Activated naive CD4-positive, alpha-beta T cell treated with anti-CD3 and anti-CD28 coated beads for 36 hours (primary cell): ENCODE measurements at regions of chr1 and their contacts with region 1.

Region 1: DNA sequence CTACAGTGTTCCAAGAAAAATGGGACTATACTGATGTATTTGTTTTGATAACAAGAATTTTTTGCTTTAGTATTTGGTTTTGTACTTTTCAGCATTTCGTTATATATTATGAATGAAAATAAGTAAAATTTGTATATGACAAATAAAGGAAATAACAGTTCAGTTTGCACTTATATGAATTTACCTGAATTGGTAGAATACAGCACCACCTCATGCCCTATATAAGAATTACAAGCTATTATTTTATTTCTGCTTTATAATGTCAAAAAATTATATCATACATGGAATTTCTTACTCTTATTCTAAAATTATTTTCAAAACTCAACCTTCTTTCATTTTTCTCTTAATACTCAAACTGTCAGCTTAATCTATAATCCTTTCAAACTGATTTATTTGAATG is 14.6 kb downstream of the EFCAB7 start:
- DNase-seq: no peak
- H3K4me3 Mint-ChIP-seq: no peak overlapping the region
- H3K27ac Mint-ChIP-seq: no peak overlapping the region
- H3K4me1 Mint-ChIP-seq: no peaks in the 10 kb centered on the region
- H3K27me3 Mint-ChIP-seq: no peaks in the 10 kb centered on the region

Region 2: GRCh38 chr1:62841587-62842169 is 696.3 kb before region 1 on chr1:
- CTCF ChIA-PET with region 1: interaction called, 4 read pairs
- intact Hi-C with region 1: loop called (anchors 5 kb)
- DNase-seq: peak; percentile 7
- H3K4me3 Mint-ChIP-seq: no peak overlapping the region
- H3K27ac Mint-ChIP-seq: no peak overlapping the region
- H3K4me1 Mint-ChIP-seq: no peaks in the 10 kb centered on the region
- H3K27me3 Mint-ChIP-seq: no peaks in the 10 kb centered on the region

Region 3: GRCh38 chr1:62962901-62963776 is 574.8 kb before region 1 on chr1:
- CTCF ChIA-PET with region 1: interaction called, 4 read pairs
- intact Hi-C with region 1: loop called (anchors 1 kb)
- DNase-seq: peak; percentile 49
- H3K4me3 Mint-ChIP-seq: no peak overlapping the region
- H3K27ac Mint-ChIP-seq: no peak overlapping the region
- H3K4me1 Mint-ChIP-seq: no peaks in the 10 kb centered on the region
- H3K27me3 Mint-ChIP-seq: peaks cover 16% of the 10 kb centered on the region

Region 4: DNA sequence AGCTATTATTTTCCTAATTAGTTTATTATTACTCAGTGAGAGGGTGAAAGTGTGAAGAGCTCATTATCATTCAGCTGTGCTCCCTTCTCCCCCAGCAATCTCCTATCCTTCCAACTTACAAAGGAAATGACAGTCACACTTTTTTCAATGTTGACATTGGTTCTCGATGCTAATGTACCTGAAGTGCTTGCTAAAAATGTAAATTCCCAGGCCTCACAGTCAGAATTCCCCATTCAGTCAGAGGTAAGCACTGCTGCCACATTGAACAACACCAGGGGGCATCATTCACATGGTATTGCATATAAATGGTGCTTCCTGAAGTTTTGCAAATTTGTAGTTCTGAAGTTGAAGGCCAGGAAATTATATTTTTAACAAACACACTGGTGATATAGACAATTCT is 348.3 kb before region 1 on chr1:
- CTCF ChIA-PET with region 1: interaction called, 11 read pairs
- intact Hi-C with region 1: no loop called
- DNase-seq: peak; percentile 15
- H3K4me3 Mint-ChIP-seq: no peak overlapping the region
- H3K27ac Mint-ChIP-seq: no peak overlapping the region
- H3K4me1 Mint-ChIP-seq: no peaks in the 10 kb centered on the region
- H3K27me3 Mint-ChIP-seq: peaks cover 5% of the 10 kb centered on the region

Region 5: DNA sequence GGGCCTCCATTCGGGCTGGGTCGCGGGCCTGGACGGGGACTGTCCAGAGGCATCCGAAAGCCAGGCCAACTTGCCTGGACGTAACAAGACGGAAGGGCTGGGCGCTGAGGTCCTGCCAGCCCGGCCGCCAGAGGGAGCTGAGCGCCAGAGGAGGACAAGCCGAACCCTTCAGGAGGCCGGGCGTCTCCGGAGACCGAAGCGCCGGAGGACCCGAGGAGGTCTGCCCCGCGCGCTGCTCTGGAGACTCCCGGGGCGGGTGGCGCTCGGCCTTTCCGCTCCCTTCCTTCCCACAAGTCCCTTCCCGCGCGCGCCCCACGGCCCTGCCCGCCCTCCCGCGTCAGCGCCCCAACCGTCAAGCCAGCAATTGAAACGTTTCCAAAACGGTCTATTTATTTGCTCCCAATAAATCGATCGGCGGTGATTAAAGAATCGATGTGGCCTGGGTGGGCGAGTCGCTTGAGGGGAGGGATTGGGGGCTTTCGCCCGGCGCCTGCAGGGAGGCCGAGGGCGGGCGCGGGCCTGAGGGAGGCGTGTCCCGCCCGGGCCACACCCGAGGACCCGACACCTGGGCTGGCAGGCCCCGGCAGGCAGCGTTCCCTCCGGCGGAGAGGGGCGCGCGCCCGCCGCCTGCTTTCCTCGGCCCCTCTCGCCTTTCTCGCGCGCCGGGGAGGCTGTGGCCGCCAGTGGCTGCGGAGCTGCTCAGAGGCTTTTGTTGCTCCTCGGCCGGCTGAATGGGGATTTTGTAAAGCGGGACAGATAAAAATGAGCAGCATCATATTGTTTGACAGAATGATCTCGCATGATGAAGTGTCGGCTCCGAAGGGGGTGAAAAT is 220.7 kb before region 1 on chr1:
- CTCF ChIA-PET with region 1: interaction called, 3 read pairs
- intact Hi-C with region 1: loop called (anchors 2 kb)
- DNase-seq: peak; percentile 67
- H3K4me3 Mint-ChIP-seq: peak overlapping the region; percentile 63
- H3K27ac Mint-ChIP-seq: no peak overlapping the region
- H3K4me1 Mint-ChIP-seq: peaks cover 38% of the 10 kb centered on the region
- H3K27me3 Mint-ChIP-seq: peaks cover 69% of the 10 kb centered on the region

Region 6: GRCh38 chr1:64000021-64000420 is 462.1 kb after region 1 on chr1:
- CTCF ChIA-PET with region 1: no interaction called
- intact Hi-C with region 1: no loop called
- DNase-seq: no peak
- H3K4me3 Mint-ChIP-seq: no peak overlapping the region
- H3K27ac Mint-ChIP-seq: no peak overlapping the region
- H3K4me1 Mint-ChIP-seq: peaks cover 2% of the 10 kb centered on the region
- H3K27me3 Mint-ChIP-seq: peaks cover 4% of the 10 kb centered on the region